ENCODE measurements at regions of chr12 and their contacts with region 1.

Region 1: GRCh38 chr12:24997970-24998582 is 49.2 kb upstream of the BCAT1 start:
- DNase-seq: no peak
- ATAC-seq: peak; percentile 74
- H3K4me3 Mint-ChIP-seq: peak overlapping the region; percentile 69
- H3K27ac Mint-ChIP-seq: peak overlapping the region; percentile 97
- H3K4me1 Mint-ChIP-seq: peaks cover 90% of the 10 kb centered on the region
- H3K27me3 Mint-ChIP-seq: no peaks in the 10 kb centered on the region
- CTCF ChIP-seq: no peak

Region 2: DNA sequence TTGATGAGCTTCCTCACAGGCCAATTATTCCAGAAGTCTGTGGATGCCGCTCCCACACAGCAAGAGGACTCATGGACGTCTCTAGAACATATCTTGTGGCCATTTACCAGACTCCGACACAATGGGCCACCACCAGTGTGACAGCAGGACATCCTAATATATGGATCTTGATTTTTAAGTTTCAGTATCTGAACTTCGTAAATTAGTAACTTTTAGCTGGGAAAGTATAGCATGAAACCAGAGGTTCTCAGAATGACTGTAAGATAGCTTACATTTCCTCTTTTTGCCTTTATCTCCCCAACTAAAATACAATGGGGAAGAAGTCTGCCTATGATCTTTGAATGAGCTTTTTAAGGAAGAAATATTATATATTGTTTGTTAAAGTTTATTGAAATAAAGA is 109.8 kb after region 1 on chr12:
- CTCF ChIA-PET with region 1: interaction called, 4 read pairs
- POLR2A ChIA-PET with region 1: interaction called, 11 read pairs
- intact Hi-C with region 1: no loop called
- DNase-seq: peak; percentile 17
- ATAC-seq: peak; percentile 84
- H3K4me3 Mint-ChIP-seq: peak overlapping the region; percentile 47
- H3K27ac Mint-ChIP-seq: peak overlapping the region; percentile 88
- H3K4me1 Mint-ChIP-seq: peaks cover 20% of the 10 kb centered on the region
- H3K27me3 Mint-ChIP-seq: no peaks in the 10 kb centered on the region
- CTCF ChIP-seq: no peak